ENCODE measurements at regions of chr3 and their contacts with region 1.

Region 1: GRCh38 chr3:192444096-192444790 is 283.1 kb downstream of the FGF12 start:
- DNase-seq: peak; percentile 51
- ATAC-seq: peak; percentile 62
- H3K4me3 Mint-ChIP-seq: no peak overlapping the region
- H3K27ac Mint-ChIP-seq: no peak overlapping the region
- H3K4me1 Mint-ChIP-seq: no peaks in the 10 kb centered on the region
- H3K27me3 Mint-ChIP-seq: peaks cover 21% of the 10 kb centered on the region
- CTCF ChIP-seq: peak; percentile 76

Region 2: DNA sequence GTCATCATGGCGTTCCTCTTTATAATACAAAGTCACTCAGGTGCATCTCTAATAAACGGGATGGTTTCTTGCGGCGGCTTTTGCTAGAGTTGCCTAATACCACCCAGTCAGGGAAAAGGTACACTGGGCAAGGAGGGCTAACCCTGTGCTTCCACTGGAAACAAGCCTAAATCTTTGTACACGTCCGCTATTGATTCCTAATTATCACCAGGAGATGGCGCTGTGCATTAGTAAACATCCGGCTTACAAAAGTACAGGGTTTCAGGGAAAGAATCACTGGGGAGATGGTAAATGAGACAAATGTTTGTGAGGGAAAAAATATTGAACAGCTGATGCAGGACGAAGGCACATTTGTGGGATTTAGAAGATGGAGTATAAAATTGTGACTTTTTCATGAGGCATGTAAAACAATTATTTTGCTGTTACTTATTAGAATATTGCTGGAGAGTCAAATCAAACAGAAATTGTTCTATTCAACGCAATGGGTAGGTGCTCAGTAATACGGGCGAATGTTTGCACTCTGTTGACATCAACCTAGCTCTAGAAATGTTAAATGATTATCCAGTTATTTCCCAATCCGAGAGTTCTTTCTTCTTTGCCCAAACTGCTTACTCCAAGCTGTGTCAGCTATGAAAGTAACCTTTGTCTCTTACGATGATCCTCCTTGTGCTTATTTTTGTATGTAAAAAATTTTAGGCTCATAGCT is 1632.3 kb before region 1 on chr3:
- CTCF ChIA-PET with region 1: interaction called, 3 read pairs
- POLR2A ChIA-PET with region 1: no interaction called
- intact Hi-C with region 1: loop called (anchors 1 kb)
- DNase-seq: no peak
- ATAC-seq: no peak
- H3K4me3 Mint-ChIP-seq: no peak overlapping the region
- H3K27ac Mint-ChIP-seq: no peak overlapping the region
- H3K4me1 Mint-ChIP-seq: no peaks in the 10 kb centered on the region
- H3K27me3 Mint-ChIP-seq: peaks cover 3% of the 10 kb centered on the region
- CTCF ChIP-seq: no peak

Region 3: GRCh38 chr3:191051037-191051436 is 1393.2 kb before region 1 on chr3:
- CTCF ChIA-PET with region 1: no interaction called
- POLR2A ChIA-PET with region 1: no interaction called
- intact Hi-C with region 1: loop called (anchors 10 kb)
- DNase-seq: no peak
- ATAC-seq: no peak
- H3K4me3 Mint-ChIP-seq: no peak overlapping the region
- H3K27ac Mint-ChIP-seq: no peak overlapping the region
- H3K4me1 Mint-ChIP-seq: no peaks in the 10 kb centered on the region
- H3K27me3 Mint-ChIP-seq: peaks cover 2% of the 10 kb centered on the region
- CTCF ChIP-seq: no peak

Region 4: GRCh38 chr3:191417457-191417729 is 1026.8 kb before region 1 on chr3:
- CTCF ChIA-PET with region 1: interaction called, 7 read pairs
- POLR2A ChIA-PET with region 1: no interaction called
- intact Hi-C with region 1: loop called (anchors 1 kb)
- DNase-seq: no peak
- ATAC-seq: no peak
- H3K4me3 Mint-ChIP-seq: no peak overlapping the region
- H3K27ac Mint-ChIP-seq: no peak overlapping the region
- H3K4me1 Mint-ChIP-seq: peaks cover 7% of the 10 kb centered on the region
- H3K27me3 Mint-ChIP-seq: no peaks in the 10 kb centered on the region
- CTCF ChIP-seq: no peak

Region 5: GRCh38 chr3:192130534-192131132 is 313.6 kb before region 1 on chr3:
- CTCF ChIA-PET with region 1: no interaction called
- POLR2A ChIA-PET with region 1: no interaction called
- intact Hi-C with region 1: loop called (anchors 1 kb)
- DNase-seq: no peak
- ATAC-seq: peak; percentile 72
- H3K4me3 Mint-ChIP-seq: no peak overlapping the region
- H3K27ac Mint-ChIP-seq: no peak overlapping the region
- H3K4me1 Mint-ChIP-seq: peaks cover 9% of the 10 kb centered on the region
- H3K27me3 Mint-ChIP-seq: no peaks in the 10 kb centered on the region
- CTCF ChIP-seq: no peak

Measured in activated B cell treated with CpG ODN at 0.5 μM for 24 hours (primary cell).